Heart left ventricle (tissue), 16 donors: ENCODE measurements at regions of chr17 and their contacts with region 1.

Region 1: DNA sequence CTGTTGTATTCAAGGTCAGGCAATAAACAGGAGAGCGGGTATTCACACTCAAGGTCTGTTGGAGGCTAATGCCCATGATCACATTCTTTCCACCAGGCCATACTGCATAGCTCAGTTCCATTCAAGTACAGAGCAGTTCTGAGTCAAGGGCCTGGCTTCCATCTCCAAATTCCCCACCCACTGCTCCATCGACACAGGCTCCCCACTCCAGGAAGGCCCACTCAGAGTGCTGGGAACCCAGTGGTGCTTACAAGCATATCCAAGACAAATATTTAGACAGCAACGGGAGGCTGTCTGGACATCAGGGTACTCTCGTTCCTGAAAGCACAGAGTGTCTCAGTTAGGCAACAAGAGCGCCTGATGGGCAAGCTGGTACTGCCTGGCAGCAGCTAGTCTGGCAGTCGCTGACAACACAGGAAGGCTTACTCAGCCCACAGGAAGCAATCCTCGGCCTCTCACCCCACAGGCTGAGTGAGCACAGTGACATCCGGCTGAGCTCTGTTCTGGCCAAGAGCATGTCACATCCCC is 40.9 kb downstream of the RFFL start:
- DNase-seq: peak; percentile 62 to 91 (median 75)
- ATAC-seq: peak; percentile 94 to 97 (median 96)
- H3K4me3 ChIP-seq: no peak overlapping the region
- H3K27ac ChIP-seq: peak overlapping the region; percentile 54 to 88 (median 77)
- H3K4me1 ChIP-seq: peaks cover 0 to 32% (median 14%) of the 10 kb centered on the region in 12 donors
- H3K27me3 ChIP-seq: no peaks in the 10 kb centered on the region
- CTCF ChIP-seq: peak in 2 of 12 donors; percentile 9 to 22
- POLR2A ChIP-seq: no peak

Region 2: GRCh38 chr17:34961093-34961911 is 61.3 kb before region 1 on chr17 and contains the starts of genes CCT6B and ZNF830:
- intact Hi-C with region 1: no loop called
- DNase-seq: peak; percentile 93 to 95 (median 93)
- ATAC-seq: peak; percentile 97 to 99 (median 98)
- H3K4me3 ChIP-seq: peak within 1 kb of the TSS; percentile 46 to 97 (median 88)
- H3K27ac ChIP-seq: peak within 1 kb of the TSS; percentile 90 to 98 (median 96)
- H3K4me1 ChIP-seq: peaks cover 0 to 27% (median 21%) of the 10 kb centered on the region in 12 donors
- H3K27me3 ChIP-seq: no peaks in the 10 kb centered on the region
- CTCF ChIP-seq: peak in 2 of 12 donors; percentile 4 to 5
- POLR2A ChIP-seq: peak in 1 of 2 donors; percentile 58
- total RNA-seq, gene CCT6B: 0.75 to 2.5 (median 1.9) TPM
- total RNA-seq, gene ZNF830: 5.7 to 10.1 (median 7.9) TPM

Region 3: DNA sequence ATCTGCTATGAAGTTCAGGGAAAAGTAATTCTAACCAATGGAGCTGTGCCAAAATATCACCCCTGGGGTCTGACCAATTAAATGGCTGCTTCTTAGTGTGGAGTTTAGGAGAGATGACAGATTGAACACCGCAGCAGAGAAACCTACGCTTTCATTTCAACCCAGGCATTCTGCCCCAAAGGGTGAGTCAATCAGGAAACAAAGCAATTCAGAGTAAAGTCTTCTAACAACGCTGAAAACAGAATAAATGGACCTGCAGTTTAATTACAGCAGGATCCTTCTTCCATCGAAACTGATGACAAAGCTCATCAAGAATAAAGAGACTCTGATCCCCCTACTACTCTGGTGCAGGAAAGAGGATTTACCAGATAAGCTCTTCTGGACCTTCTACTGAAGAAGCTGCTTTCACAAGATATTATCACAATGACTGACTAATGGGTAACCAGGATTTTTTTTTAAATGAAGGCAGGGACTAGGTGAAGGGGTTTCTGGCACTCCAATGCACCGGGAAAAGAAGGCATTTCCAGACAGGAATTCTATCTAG is 24.2 kb after region 1 on chr17:
- intact Hi-C with region 1: no loop called
- DNase-seq: no peak
- ATAC-seq: no peak
- H3K4me3 ChIP-seq: peak overlapping the region in 1 of 12 donors; percentile 15
- H3K27ac ChIP-seq: peak overlapping the region in 1 of 12 donors; percentile 67
- H3K4me1 ChIP-seq: peaks cover 0 to 51% (median 10%) of the 10 kb centered on the region in 12 donors
- H3K27me3 ChIP-seq: no peaks in the 10 kb centered on the region
- CTCF ChIP-seq: no peak
- POLR2A ChIP-seq: no peak

Region 4: DNA sequence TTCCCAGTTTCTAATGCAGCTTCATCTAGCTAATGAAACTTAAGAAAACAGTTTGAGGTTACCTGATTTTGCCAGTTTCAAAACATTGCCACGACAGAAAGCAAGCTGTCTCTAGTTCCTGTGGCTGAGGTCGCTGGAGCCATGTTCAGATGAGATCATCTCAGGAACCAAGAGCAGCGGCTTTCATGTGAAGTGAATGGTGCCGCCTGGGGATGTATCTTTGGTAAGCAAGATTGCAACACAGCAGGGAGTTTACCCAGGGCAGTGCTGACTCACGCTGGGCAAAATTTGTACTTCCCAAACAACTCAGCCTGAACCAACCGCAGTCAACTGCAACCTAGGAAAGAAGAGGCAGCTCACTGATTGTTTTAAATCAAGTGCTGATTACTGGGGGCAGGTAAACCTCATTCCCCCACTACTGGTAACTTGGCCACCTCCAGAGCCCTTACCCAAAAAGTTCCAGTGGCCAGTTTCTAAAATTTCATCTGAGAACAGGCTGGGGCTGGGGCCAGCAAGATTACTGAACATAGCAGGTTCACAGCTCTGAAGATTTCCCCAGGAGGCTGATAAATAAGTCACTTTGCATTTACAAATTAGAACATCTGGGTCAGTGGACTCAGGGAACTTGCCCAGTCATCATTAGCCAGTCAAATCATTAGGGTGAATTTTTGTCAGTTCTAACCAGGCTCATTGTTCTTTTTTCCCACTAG is 41.1 kb after region 1 on chr17 and contains the start of gene RFFL:
- intact Hi-C with region 1: loop called in 2 of 10 experiments (anchors 5 kb)
- DNase-seq: peak; percentile 76 to 89 (median 83)
- ATAC-seq: peak; percentile 97 to 100 (median 99)
- H3K4me3 ChIP-seq: peak within 1 kb of the TSS in 9 of 12 donors; percentile 26 to 44 (median 34)
- H3K27ac ChIP-seq: peak within 1 kb of the TSS; percentile 37 to 94 (median 79)
- H3K4me1 ChIP-seq: peaks cover 0 to 34% (median 10%) of the 10 kb centered on the region in 12 donors
- H3K27me3 ChIP-seq: no peaks in the 10 kb centered on the region
- CTCF ChIP-seq: peak in 7 of 12 donors; percentile 17 to 48 (median 26)
- POLR2A ChIP-seq: peak in 1 of 2 donors; percentile 43
- total RNA-seq, gene RFFL: 10.1 to 21.6 (median 13.5) TPM

Region 5: DNA sequence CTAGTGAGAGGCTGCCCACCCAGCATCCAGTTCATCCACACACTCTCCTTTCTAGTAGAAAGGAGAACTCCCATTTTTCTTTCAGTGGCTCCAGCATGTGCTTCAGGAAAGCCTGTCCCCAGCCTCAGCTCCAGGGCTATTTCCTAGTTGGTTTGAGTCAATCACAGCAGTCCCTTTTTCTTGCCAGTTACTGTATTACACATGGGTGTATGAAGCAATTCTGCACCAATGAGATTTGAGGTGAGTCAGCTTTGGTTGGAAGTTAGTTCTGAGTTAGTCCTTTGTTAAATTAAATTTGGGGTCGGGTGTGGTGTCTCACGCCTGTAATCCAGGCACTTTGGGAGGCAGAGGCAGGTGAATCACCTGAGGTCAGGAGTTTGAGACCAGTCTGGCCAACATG is 72.3 kb after region 1 on chr17:
- intact Hi-C with region 1: no loop called
- DNase-seq: no peak
- ATAC-seq: peak in 2 of 4 donors; percentile 59 to 60
- H3K4me3 ChIP-seq: no peak overlapping the region
- H3K27ac ChIP-seq: no peak overlapping the region
- H3K4me1 ChIP-seq: peaks cover 0 to 4% (median 0%) of the 10 kb centered on the region in 12 donors
- H3K27me3 ChIP-seq: no peaks in the 10 kb centered on the region
- CTCF ChIP-seq: no peak
- POLR2A ChIP-seq: no peak